ENCODE measurements at regions of chr6 and their contacts with region 1.

Region 1: GRCh38 chr6:27838058-27838944 is 73.9 kb downstream of the OR2B2 start:
- DNase-seq: peak; percentile 88
- H3K4me3 ChIP-seq: peak overlapping the region; percentile 48 to 75 (median 65)
- H3K27ac ChIP-seq: peak overlapping the region; percentile 87 to 97 (median 94)
- H3K4me1 ChIP-seq: peaks cover 0 to 37% (median 17%) of the 10 kb centered on the region in 4 donors
- H3K27me3 ChIP-seq: peaks cover 0 to 24% (median 18%) of the 10 kb centered on the region in 3 donors
- CTCF ChIP-seq: peak in 2 of 4 experiments; percentile 12 to 18
- EP300 ChIP-seq: no peak
- POLR2A ChIP-seq: peak; percentile 80 to 92

Region 2: GRCh38 chr6:27479319-27480182 is 358.8 kb before region 1 on chr6:
- intact Hi-C with region 1: loop called (anchors 2 kb)
- DNase-seq: peak; percentile 91
- H3K4me3 ChIP-seq: peak overlapping the region; percentile 64 to 74 (median 68)
- H3K27ac ChIP-seq: peak overlapping the region; percentile 91 to 96 (median 95)
- H3K4me1 ChIP-seq: peaks cover 0 to 14% (median 9%) of the 10 kb centered on the region in 4 donors
- H3K27me3 ChIP-seq: no peaks in the 10 kb centered on the region
- CTCF ChIP-seq: no peak
- EP300 ChIP-seq: no peak
- POLR2A ChIP-seq: no peak

Region 3: DNA sequence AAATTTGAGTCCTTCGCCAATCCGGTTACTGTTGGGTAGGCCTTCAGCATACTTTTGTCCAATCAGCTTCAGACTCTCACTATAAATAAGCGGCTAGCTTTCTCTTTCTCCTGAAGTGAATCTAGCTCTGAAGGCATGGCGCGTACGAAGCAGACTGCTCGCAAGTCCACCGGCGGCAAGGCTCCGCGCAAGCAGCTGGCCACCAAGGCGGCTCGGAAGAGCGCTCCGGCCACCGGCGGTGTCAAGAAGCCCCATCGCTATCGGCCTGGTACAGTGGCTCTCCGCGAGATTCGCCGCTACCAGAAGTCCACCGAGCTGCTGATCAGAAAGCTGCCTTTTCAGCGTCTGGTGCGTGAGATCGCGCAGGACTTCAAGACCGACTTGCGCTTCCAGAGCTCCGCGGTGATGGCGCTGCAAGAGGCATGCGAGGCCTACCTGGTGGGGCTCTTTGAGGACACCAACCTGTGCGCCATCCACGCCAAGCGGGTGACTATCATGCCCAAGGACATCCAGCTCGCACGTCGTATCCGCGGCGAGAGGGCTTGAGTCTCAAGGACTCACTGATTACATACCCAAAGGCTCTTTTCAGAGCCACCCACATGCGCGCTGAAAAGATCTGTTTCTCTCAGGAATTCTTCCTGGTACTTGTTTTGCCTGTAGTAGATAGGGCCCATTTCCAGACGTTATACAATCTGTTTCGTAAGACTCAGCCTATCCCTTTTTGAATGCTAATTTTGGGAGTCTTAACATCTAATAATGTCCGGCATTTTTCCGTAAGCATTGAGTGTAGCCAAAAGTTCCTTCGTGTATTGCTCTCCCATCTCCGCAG is 28.1 kb before region 1 on chr6:
- intact Hi-C with region 1: loop called (anchors 2 kb)
- DNase-seq: peak; percentile 89
- H3K4me3 ChIP-seq: peak overlapping the region; percentile 42 to 57 (median 50)
- H3K27ac ChIP-seq: peak overlapping the region; percentile 79 to 92 (median 84)
- H3K4me1 ChIP-seq: peaks cover 0 to 28% (median 16%) of the 10 kb centered on the region in 4 donors
- H3K27me3 ChIP-seq: peaks cover 22 to 85% (median 62%) of the 10 kb centered on the region in 3 donors
- CTCF ChIP-seq: no peak
- EP300 ChIP-seq: no peak
- POLR2A ChIP-seq: peak; percentile 93 to 96

Region 4: DNA sequence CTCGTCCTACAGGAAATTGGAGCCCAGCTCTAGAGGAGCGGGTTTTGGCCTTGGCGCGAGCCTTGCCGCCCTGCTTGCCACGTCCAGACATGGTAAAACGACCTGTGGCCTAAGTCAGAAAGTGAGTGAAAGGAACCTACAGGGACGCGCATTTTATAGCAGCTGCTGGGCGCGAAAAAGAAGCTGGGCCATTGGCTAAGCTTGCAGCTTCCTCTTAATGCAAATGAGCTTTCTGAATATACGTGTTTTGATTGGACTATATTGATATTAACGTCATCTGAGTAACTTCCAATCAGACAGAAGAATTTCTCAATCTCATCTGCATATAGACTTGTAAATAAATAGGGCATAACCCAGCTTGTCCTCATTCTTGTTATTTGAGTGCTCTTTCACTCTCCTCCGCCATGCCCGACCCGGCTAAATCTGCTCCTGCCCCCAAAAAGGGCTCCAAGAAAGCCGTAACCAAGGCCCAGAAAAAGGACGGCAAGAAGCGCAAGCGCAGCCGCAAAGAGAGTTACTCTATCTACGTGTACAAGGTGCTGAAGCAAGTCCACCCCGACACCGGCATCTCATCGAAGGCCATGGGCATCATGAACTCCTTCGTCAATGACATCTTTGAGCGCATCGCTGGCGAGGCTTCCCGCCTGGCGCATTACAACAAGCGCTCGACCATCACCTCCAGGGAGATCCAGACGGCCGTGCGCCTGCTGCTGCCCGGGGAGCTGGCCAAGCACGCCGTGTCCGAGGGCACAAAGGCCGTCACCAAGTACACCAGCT is 54.9 kb after region 1 on chr6:
- intact Hi-C with region 1: loop called (anchors 2 kb)
- DNase-seq: peak; percentile 81
- H3K4me3 ChIP-seq: peak overlapping the region; percentile 48 to 71 (median 59)
- H3K27ac ChIP-seq: peak overlapping the region in 3 of 4 donors; percentile 33 to 92 (median 59)
- H3K4me1 ChIP-seq: peaks cover 0 to 25% (median 24%) of the 10 kb centered on the region in 4 donors
- H3K27me3 ChIP-seq: peaks cover 22 to 56% (median 47%) of the 10 kb centered on the region in 3 donors
- CTCF ChIP-seq: no peak
- EP300 ChIP-seq: no peak
- POLR2A ChIP-seq: peak in 1 of 2 donors; percentile 84

Region 5: GRCh38 chr6:28225056-28225834 is 386.9 kb after region 1 on chr6 and contains the start of gene ZSCAN9:
- intact Hi-C with region 1: no loop called
- DNase-seq: peak; percentile 93
- H3K4me3 ChIP-seq: peak within 1 kb of the TSS; percentile 67 to 78 (median 71)
- H3K27ac ChIP-seq: peak within 1 kb of the TSS; percentile 81 to 87 (median 86)
- H3K4me1 ChIP-seq: peaks cover 0 to 21% (median 8%) of the 10 kb centered on the region in 4 donors
- H3K27me3 ChIP-seq: no peaks in the 10 kb centered on the region
- CTCF ChIP-seq: no peak
- EP300 ChIP-seq: peak in 1 of 4 donors; percentile 11
- POLR2A ChIP-seq: no peak
- total RNA-seq, gene ZSCAN9: 14.0 to 15.1 (median 14.8) TPM

Measured in sigmoid colon (tissue), 7 donors.